Adrenal gland (tissue), 19 donors: ENCODE measurements at regions of chr11 and their contacts with region 1.

Region 1: GRCh38 chr11:2428322-2428795 is 16.0 kb downstream of the TRPM5 start:
- DNase-seq: peak; percentile 80 to 93 (median 87)
- H3K4me3 ChIP-seq: no peak overlapping the region
- H3K27ac ChIP-seq: no peak overlapping the region
- H3K4me1 ChIP-seq: no peaks in the 10 kb centered on the region
- H3K27me3 ChIP-seq: no peaks in the 10 kb centered on the region
- CTCF ChIP-seq: peak; percentile 83 to 99 (median 96)
- POLR2A ChIP-seq: no peak

Region 2: GRCh38 chr11:2532704-2533586 is 104.6 kb after region 1 on chr11:
- intact Hi-C with region 1: loop called (anchors 1 to 2 kb)
- DNase-seq: peak; percentile 88 to 96 (median 94)
- H3K4me3 ChIP-seq: peak overlapping the region in 1 of 4 donors; percentile 35
- H3K27ac ChIP-seq: peak overlapping the region; percentile 45 to 93 (median 85)
- H3K4me1 ChIP-seq: peaks cover 27 to 30% of the 10 kb centered on the region in 2 donors
- H3K27me3 ChIP-seq: no peaks in the 10 kb centered on the region
- CTCF ChIP-seq: peak; percentile 98 to 100 (median 99)
- POLR2A ChIP-seq: peak in 1 of 2 donors; percentile 9

Region 3: GRCh38 chr11:2586087-2586792 is 157.9 kb after region 1 on chr11:
- intact Hi-C with region 1: no loop called
- DNase-seq: peak in 5 of 7 donors; percentile 1 to 48 (median 13)
- H3K4me3 ChIP-seq: no peak overlapping the region
- H3K27ac ChIP-seq: peak overlapping the region in 1 of 5 donors; percentile 58
- H3K4me1 ChIP-seq: no peaks in the 10 kb centered on the region
- H3K27me3 ChIP-seq: no peaks in the 10 kb centered on the region
- CTCF ChIP-seq: no peak
- POLR2A ChIP-seq: no peak

Region 4: DNA sequence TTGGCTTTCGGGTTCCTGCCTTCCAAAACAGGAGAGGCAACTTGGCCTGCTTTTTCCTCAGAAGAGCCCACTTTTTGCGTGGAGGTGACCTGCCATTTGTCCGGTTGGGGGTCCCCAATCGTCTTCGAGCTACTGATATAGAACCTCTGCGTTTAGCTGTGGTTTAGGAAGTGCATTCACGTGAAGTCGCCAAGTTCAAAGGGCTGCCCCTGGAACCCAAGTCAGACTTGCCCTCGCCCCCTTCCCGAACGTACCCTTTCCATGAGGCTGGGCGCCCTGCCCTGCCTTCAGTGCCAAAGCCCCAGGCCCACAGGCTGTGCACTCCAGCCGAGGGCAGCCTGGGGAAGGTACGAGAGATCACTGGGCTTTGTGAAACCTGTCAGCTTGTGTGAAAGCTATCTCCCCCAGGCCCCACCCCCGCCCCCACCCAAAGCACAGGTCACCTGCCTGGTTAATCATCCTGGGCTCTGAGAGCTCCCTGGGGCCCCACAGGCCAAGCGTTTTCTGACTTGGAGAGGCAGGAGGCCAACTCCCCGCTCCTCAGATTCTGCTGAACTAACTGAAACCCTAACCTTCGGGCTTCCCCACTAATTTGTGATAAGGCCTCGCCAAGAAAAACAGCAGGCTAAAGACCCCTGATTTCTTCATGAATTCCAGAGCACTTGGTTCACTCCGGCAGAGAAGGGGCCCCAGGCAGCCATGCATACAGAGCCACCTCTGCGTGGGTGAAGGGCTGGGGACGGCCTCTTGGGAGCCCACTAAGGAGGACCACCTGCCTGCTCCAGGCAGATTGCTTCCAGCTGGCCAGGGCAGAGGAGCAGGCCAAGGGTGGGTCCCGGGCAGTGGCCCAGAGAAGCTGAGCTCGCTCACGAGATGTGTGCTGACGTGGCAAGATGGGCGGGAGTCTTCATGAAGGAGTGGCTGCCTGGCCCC is 297.3 kb after region 1 on chr11:
- intact Hi-C with region 1: no loop called
- DNase-seq: peak in 2 of 7 donors; percentile 43 to 52
- H3K4me3 ChIP-seq: no peak overlapping the region
- H3K27ac ChIP-seq: peak overlapping the region in 2 of 5 donors; percentile 63 to 79
- H3K4me1 ChIP-seq: no peaks in the 10 kb centered on the region
- H3K27me3 ChIP-seq: no peaks in the 10 kb centered on the region
- CTCF ChIP-seq: no peak
- POLR2A ChIP-seq: no peak

Region 5: GRCh38 chr11:2892215-2893020 is 464.1 kb after region 1 on chr11:
- intact Hi-C with region 1: loop called (anchors 2 to 5 kb)
- DNase-seq: peak in 5 of 7 donors; percentile 31 to 61 (median 52)
- H3K4me3 ChIP-seq: peak overlapping the region in 1 of 4 donors; percentile 49
- H3K27ac ChIP-seq: peak overlapping the region in 3 of 5 donors; percentile 4 to 70 (median 52)
- H3K4me1 ChIP-seq: peaks cover 14 to 20% of the 10 kb centered on the region in 2 donors
- H3K27me3 ChIP-seq: no peaks in the 10 kb centered on the region
- CTCF ChIP-seq: peak; percentile 84 to 95 (median 90)
- POLR2A ChIP-seq: no peak